ENCODE measurements at regions of chr11 and their contacts with region 1.

Region 1: DNA sequence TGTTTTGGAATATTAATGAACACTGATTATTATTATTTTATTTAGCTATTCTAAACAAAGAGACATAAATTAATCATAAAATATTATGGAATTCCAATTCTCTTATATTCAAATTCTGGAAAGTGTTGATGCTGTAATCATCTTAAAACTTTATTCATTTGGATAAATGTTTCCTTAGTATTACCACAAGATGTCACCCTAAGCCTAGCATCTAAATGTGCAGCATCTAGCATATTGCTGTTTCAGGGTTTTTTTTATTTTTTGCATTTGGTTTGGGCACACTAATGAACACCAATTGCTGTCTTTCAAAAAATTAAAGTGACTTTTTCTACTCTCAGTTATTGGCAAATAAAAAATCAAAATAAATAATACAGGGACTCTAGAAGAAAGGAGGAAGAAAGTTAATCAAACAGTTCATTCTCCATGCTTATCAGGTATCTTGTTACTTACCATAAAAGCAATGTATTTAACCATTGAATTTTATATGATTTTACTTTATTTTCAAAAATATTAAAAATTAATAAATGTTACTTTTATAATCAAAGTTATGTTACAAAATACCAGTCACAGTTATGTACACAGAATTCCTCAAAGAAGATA is 31.8 kb downstream of the DLG2 start:
- DNase-seq: no peak
- H3K4me3 Mint-ChIP-seq: no peak overlapping the region
- H3K27ac Mint-ChIP-seq: no peak overlapping the region
- H3K4me1 Mint-ChIP-seq: no peaks in the 10 kb centered on the region
- H3K27me3 Mint-ChIP-seq: no peaks in the 10 kb centered on the region

Region 2: GRCh38 chr11:84384731-84385130 is 1210.7 kb before region 1 on chr11:
- CTCF ChIA-PET with region 1: no interaction called
- intact Hi-C with region 1: loop called (anchors 10 kb)
- DNase-seq: peak; percentile 51
- H3K4me3 Mint-ChIP-seq: no peak overlapping the region
- H3K27ac Mint-ChIP-seq: no peak overlapping the region
- H3K4me1 Mint-ChIP-seq: no peaks in the 10 kb centered on the region
- H3K27me3 Mint-ChIP-seq: no peaks in the 10 kb centered on the region

Region 3: GRCh38 chr11:85627998-85628770 is 32.8 kb after region 1 on chr11 and contains the start of gene TMEM126B:
- CTCF ChIA-PET with region 1: interaction called, 3 read pairs
- intact Hi-C with region 1: loop called (anchors 1 kb)
- DNase-seq: peak; percentile 98
- H3K4me3 Mint-ChIP-seq: peak within 1 kb of the TSS; percentile 99
- H3K27ac Mint-ChIP-seq: peak within 1 kb of the TSS; percentile 96
- H3K4me1 Mint-ChIP-seq: peaks cover 33% of the 10 kb centered on the region
- H3K27me3 Mint-ChIP-seq: no peaks in the 10 kb centered on the region
- total RNA-seq, gene TMEM126B: 72.6 to 79.0 TPM

Region 4: GRCh38 chr11:85826116-85826855 is 230.9 kb after region 1 on chr11:
- CTCF ChIA-PET with region 1: interaction called, 4 read pairs
- intact Hi-C with region 1: loop called (anchors 10 kb)
- DNase-seq: peak; percentile 51
- H3K4me3 Mint-ChIP-seq: peak overlapping the region; percentile 28
- H3K27ac Mint-ChIP-seq: peak overlapping the region; percentile 20
- H3K4me1 Mint-ChIP-seq: peaks cover 57% of the 10 kb centered on the region
- H3K27me3 Mint-ChIP-seq: no peaks in the 10 kb centered on the region

Region 5: GRCh38 chr11:86202013-86202336 is 606.6 kb after region 1 on chr11:
- CTCF ChIA-PET with region 1: no interaction called
- intact Hi-C with region 1: loop called (anchors 5 kb)
- DNase-seq: peak; percentile 42
- H3K4me3 Mint-ChIP-seq: no peak overlapping the region
- H3K27ac Mint-ChIP-seq: no peak overlapping the region
- H3K4me1 Mint-ChIP-seq: no peaks in the 10 kb centered on the region
- H3K27me3 Mint-ChIP-seq: no peaks in the 10 kb centered on the region

Region 6: GRCh38 chr11:86818466-86819192 is 1223.2 kb after region 1 on chr11:
- CTCF ChIA-PET with region 1: no interaction called
- intact Hi-C with region 1: loop called (anchors 5 kb)
- DNase-seq: no peak
- H3K4me3 Mint-ChIP-seq: no peak overlapping the region
- H3K27ac Mint-ChIP-seq: no peak overlapping the region
- H3K4me1 Mint-ChIP-seq: peaks cover 4% of the 10 kb centered on the region
- H3K27me3 Mint-ChIP-seq: peaks cover 21% of the 10 kb centered on the region

Measured in activated naive CD4-positive, alpha-beta T cell treated with anti-CD3 and anti-CD28 coated beads for 36 hours (primary cell).